ENCODE measurements at regions of chr15 and their contacts with region 1.

Region 1: GRCh38 chr15:80695104-80695910 is at the start of gene ABHD17C:
- DNase-seq: peak; percentile 65
- H3K4me3 Mint-ChIP-seq: peak within 1 kb of the TSS; percentile 92
- H3K27ac Mint-ChIP-seq: peak within 1 kb of the TSS; percentile 73
- H3K4me1 Mint-ChIP-seq: peaks cover 39% of the 10 kb centered on the region
- H3K27me3 Mint-ChIP-seq: no peaks in the 10 kb centered on the region
- CTCF ChIP-seq: no peak
- total RNA-seq, gene ABHD17C: 10.1 and 11.9 TPM in 2 replicates

Region 2: DNA sequence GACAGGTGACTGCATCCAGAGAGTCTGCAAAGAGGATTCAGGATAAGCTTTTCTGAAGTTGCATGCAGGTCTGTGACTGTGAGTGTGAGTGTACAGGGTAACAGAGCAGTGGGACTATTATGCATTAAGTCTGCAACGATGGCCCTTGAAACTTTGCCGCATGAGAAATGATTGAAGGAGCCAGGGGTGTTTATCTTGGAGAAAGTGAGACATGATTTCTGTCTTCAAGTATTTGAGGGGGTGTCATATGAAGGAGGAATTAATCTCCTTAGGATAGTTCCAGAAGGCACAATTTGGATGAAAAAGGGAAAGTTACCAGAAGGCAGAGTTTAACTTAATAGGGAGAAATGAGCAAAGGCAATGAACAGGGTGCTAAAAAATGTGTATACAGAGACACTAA is 171.6 kb before region 1 on chr15:
- CTCF ChIA-PET with region 1: no interaction called
- POLR2A ChIA-PET with region 1: no interaction called
- intact Hi-C with region 1: no loop called
- DNase-seq: no peak
- H3K4me3 Mint-ChIP-seq: no peak overlapping the region
- H3K27ac Mint-ChIP-seq: no peak overlapping the region
- H3K4me1 Mint-ChIP-seq: no peaks in the 10 kb centered on the region
- H3K27me3 Mint-ChIP-seq: no peaks in the 10 kb centered on the region
- CTCF ChIP-seq: no peak

Region 3: GRCh38 chr15:80588801-80589200 is 106.5 kb before region 1 on chr15:
- CTCF ChIA-PET with region 1: interaction called, 12 read pairs
- POLR2A ChIA-PET with region 1: interaction called, 11 read pairs
- intact Hi-C with region 1: loop called (anchors 5 kb)
- DNase-seq: peak; percentile 79
- H3K4me3 Mint-ChIP-seq: peak overlapping the region; percentile 1
- H3K27ac Mint-ChIP-seq: peak overlapping the region; percentile 37
- H3K4me1 Mint-ChIP-seq: peaks cover 37% of the 10 kb centered on the region
- H3K27me3 Mint-ChIP-seq: no peaks in the 10 kb centered on the region
- CTCF ChIP-seq: no peak

Region 4: GRCh38 chr15:80619680-80620079 is 75.6 kb before region 1 on chr15:
- CTCF ChIA-PET with region 1: interaction called, 13 read pairs
- POLR2A ChIA-PET with region 1: interaction called, 9 read pairs
- intact Hi-C with region 1: no loop called
- DNase-seq: no peak
- H3K4me3 Mint-ChIP-seq: no peak overlapping the region
- H3K27ac Mint-ChIP-seq: no peak overlapping the region
- H3K4me1 Mint-ChIP-seq: peaks cover 24% of the 10 kb centered on the region
- H3K27me3 Mint-ChIP-seq: no peaks in the 10 kb centered on the region
- CTCF ChIP-seq: no peak

Region 5: DNA sequence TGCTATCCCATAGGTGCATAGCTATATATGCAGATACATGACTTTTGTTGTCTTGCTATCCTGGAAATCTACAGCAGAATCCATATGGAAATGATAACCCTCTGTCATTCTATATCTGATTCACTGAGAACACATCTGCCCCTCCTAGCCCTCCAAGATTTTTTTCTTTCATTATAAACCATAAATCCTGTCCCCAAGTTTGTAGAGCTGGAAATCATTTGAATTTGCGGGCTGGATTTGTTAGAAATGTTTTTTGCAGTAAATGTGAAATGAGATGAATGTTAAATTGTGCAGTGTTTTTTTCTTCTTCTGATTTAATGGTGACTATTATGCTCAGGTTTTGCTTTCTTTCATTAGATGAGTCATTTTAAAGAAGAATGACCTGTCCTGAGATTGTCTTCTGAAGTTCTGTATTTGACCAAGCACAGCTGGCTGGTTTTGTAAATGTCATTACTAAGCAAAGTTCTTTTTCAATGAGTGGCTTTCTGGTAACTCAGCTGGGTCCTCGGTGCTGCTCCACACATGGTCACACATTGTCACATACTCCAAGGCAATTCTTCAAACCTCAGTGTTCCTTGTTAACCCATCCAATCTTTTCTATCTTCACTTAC is 25.5 kb before region 1 on chr15:
- CTCF ChIA-PET with region 1: interaction called, 6 read pairs
- POLR2A ChIA-PET with region 1: interaction called, 16 read pairs
- intact Hi-C with region 1: loop called (anchors 5 kb)
- DNase-seq: no peak
- H3K4me3 Mint-ChIP-seq: no peak overlapping the region
- H3K27ac Mint-ChIP-seq: no peak overlapping the region
- H3K4me1 Mint-ChIP-seq: peaks cover 17% of the 10 kb centered on the region
- H3K27me3 Mint-ChIP-seq: no peaks in the 10 kb centered on the region
- CTCF ChIP-seq: no peak